ENCODE measurements at regions of chr1 and their contacts with region 1.

Region 1: DNA sequence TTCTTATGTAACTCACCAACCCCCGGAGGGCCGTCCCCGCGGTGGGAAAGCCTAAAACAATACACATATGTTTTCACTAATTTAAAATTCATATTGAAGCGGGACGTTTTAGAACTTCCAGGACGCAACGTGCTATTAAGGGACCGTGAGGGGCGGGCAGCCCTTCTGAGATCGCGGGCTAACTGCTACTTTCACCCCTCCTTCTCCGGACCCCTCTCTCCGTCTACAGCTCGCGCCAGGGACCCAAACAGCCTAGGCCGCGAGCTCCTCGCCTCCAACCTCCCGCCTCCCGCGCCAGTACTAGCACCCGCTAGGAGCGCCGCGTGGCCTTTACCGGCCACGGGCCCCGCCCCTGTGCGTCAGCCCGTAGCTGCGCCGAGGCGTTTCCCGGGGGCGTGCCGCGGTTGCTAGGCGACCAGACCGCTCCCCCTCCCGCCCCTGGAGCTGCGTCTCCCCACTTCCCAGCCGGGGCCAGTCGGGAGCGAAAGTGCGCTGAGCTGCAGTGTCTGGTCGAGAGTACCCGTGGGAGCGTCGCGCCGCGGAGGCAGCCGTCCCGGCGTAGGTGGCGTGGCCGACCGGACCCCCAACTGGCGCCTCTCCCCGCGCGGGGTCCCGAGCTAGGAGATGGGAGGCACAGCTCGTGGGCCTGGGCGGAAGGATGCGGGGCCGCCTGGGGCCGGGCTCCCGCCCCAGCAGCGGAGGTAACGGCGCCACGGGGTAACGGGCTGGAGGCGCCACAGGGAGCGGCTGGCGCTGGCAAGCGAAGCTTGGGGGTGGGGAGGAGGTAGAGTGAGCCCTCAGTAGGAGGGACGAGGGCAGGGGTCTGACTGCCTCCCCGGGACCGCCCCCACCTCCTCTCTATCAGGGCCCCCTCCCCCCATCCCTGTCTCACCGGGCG is at the start of gene DYRK3:
- DNase-seq: peak; percentile 72
- ATAC-seq: peak; percentile 91
- H3K4me3 ChIP-seq: peak within 1 kb of the TSS; percentile 67 to 78
- H3K27ac ChIP-seq: peak within 1 kb of the TSS; percentile 32; the same call in 1 of the 2 replicates
- H3K4me1 ChIP-seq: peaks cover 4 to 26% of the 10 kb centered on the region in 2 experiments; a peak in 3 of 4 replicates
- H3K27me3 ChIP-seq: no peaks in the 10 kb centered on the region
- CTCF ChIP-seq: no peak
- POLR2A ChIP-seq: peak; percentile 89
- RAD21 ChIP-seq: no peak
- total RNA-seq, gene DYRK3: 7.1 TPM

Region 2: DNA sequence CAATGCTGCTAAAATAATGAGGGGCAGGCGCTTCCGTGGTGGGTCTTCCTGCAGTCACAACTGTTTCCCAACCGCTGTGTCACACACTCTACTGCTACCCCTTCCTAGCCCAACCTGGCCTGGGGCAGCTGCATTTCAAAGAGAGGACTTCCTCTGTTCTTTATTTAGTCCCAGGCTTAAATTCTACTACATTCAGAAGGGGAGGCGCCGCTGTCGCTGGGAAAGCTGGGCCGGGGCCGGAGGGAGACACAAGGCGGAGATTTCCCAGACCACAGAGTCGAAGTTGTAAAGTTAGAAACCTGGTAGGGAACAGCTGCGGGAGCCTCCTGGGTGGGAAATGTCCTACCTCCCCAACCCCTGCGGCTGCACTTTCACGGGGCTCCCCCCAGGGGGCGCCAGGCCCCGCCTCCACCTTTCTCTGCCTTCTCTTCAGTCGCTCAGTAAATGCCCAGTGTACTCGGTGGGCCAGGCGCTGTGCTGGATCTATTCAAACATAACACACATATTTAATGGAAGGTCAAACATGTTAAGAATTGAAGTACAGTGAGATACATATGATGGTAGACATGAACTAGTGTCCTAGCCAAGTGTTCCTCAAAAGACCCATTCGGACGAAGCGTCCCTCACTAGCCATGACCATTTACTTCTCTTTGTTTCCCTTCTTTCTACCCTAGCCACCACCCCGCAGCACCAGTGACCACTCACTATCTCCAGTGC is 23.1 kb after region 1 on chr1:
- CTCF ChIA-PET with region 1: interaction called, 71 read pairs
- POLR2A ChIA-PET with region 1: interaction called, 11 read pairs
- RAD21 ChIA-PET with region 1: interaction called, 9 to 11 read pairs
- intact Hi-C with region 1: no loop called
- DNase-seq: peak; percentile 12
- ATAC-seq: peak; percentile 94
- H3K4me3 ChIP-seq: no peak overlapping the region
- H3K27ac ChIP-seq: no peak overlapping the region
- H3K4me1 ChIP-seq: no peaks in the 10 kb centered on the region; a peak in 1 of 4 replicates
- H3K27me3 ChIP-seq: peaks cover 14% of the 10 kb centered on the region; the same call in 1 of the 2 replicates
- CTCF ChIP-seq: peak; percentile 33 to 96 (median 95); a peak in 5 of 6 replicates
- POLR2A ChIP-seq: no peak
- RAD21 ChIP-seq: peak; percentile 31; the same call in 1 of the 2 replicates

Measured in HCT116 (cell line).